ENCODE measurements at regions of chr13 and their contacts with region 1.

Region 1: DNA sequence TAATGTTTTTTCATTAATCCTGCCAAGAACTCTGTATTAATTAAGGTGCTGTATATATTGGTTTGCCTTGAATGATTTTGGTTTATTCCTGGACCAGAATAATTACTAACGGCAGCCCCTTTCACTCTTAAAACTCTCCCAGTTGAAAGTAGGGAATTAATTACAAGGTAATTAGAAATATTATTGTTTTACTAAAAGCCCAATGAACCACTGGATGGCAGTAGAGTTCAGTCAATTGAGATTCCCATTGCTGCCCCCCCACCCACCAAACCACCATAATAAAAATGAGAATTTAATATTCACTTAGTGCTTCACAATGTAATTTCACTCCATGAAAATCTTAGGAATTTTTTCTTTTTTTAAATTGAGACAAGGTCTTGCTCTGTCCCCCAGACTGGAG is 13.7 kb downstream of the WBP4 start:
- DNase-seq: no peak
- ATAC-seq: no peak
- H3K4me3 ChIP-seq: no peak overlapping the region
- H3K27ac ChIP-seq: no peak overlapping the region
- H3K4me1 ChIP-seq: no peaks in the 10 kb centered on the region
- H3K27me3 ChIP-seq: no peaks in the 10 kb centered on the region
- CTCF ChIP-seq: peak; percentile 52; the same call in 1 of the 2 replicates

Region 2: GRCh38 chr13:41193919-41194824 is 119.1 kb after region 1 on chr13 and contains the start of gene KBTBD7:
- CTCF ChIA-PET with region 1: no interaction called
- POLR2A ChIA-PET with region 1: no interaction called
- in situ Hi-C with region 1: no loop called
- intact Hi-C with region 1: loop called (anchors 10 kb)
- DNase-seq: peak; percentile 63
- ATAC-seq: peak; percentile 100
- H3K4me3 ChIP-seq: peak within 1 kb of the TSS; percentile 56 to 64
- H3K27ac ChIP-seq: peak within 1 kb of the TSS; percentile 79
- H3K4me1 ChIP-seq: peaks cover 3% of the 10 kb centered on the region; the same call in 1 of the 2 replicates
- H3K27me3 ChIP-seq: no peaks in the 10 kb centered on the region
- CTCF ChIP-seq: no peak
- total RNA-seq, gene KBTBD7: 5.5 TPM

Region 3: DNA sequence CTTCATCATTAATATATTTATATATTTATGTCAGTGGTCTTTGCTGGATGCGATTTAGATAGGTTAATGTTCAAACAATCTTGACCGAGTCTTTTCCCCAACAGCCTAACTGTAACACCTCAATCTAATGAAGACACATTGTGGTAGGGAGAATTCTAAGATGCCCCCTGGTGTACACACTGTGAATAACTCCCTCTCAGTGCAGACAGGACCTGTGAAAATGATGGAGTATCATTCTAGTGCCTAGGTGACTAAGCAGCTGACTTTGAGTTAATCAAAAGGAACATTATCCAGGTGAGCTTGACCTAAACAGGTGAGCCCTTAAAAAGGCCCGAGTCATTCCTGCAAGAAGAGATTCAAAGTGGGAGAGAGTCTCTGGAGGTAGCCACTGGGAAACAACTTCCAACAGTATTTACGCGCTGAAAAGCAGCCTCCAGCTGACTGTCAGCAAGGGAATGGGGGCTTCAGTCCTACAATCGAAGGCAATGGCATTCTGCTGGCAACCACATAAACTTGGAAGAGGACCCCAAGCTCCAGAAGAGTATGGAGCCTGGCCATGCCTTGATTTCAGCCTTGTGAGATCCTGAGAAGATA is 147.3 kb after region 1 on chr13:
- CTCF ChIA-PET with region 1: interaction called, 7 read pairs
- POLR2A ChIA-PET with region 1: no interaction called
- in situ Hi-C with region 1: no loop called
- intact Hi-C with region 1: loop called (anchors 1 kb)
- DNase-seq: peak; percentile 43
- ATAC-seq: peak; percentile 92
- H3K4me3 ChIP-seq: no peak overlapping the region
- H3K27ac ChIP-seq: no peak overlapping the region
- H3K4me1 ChIP-seq: no peaks in the 10 kb centered on the region
- H3K27me3 ChIP-seq: no peaks in the 10 kb centered on the region
- CTCF ChIP-seq: peak; percentile 75